ENCODE measurements at regions of chr22 and their contacts with region 1.

Region 1: GRCh38 chr22:18057568-18058209 is 20.1 kb upstream of the PEX26 start:
- DNase-seq: peak; percentile 75
- H3K4me3 ChIP-seq: peak overlapping the region; percentile 50
- H3K27ac ChIP-seq: peak overlapping the region; percentile 65
- H3K4me1 ChIP-seq: peaks cover 55% of the 10 kb centered on the region
- CTCF ChIP-seq: no peak

Region 2: GRCh38 chr22:17982572-17983141 is 75.0 kb before region 1 on chr22:
- CTCF ChIA-PET with region 1: no interaction called
- POLR2A ChIA-PET with region 1: no interaction called
- intact Hi-C with region 1: no loop called
- DNase-seq: no peak
- H3K4me3 ChIP-seq: no peak overlapping the region
- H3K27ac ChIP-seq: peak overlapping the region; percentile 64
- H3K4me1 ChIP-seq: peaks cover 71% of the 10 kb centered on the region
- CTCF ChIP-seq: no peak

Region 3: GRCh38 chr22:18012531-18012930 is 45.2 kb before region 1 on chr22:
- CTCF ChIA-PET with region 1: no interaction called
- POLR2A ChIA-PET with region 1: no interaction called
- intact Hi-C with region 1: no loop called
- DNase-seq: no peak
- H3K4me3 ChIP-seq: no peak overlapping the region
- H3K27ac ChIP-seq: no peak overlapping the region
- H3K4me1 ChIP-seq: peaks cover 22% of the 10 kb centered on the region
- CTCF ChIP-seq: no peak

Region 4: GRCh38 chr22:18031695-18032454 is 25.8 kb before region 1 on chr22:
- CTCF ChIA-PET with region 1: interaction called, 5 read pairs
- POLR2A ChIA-PET with region 1: interaction called, 48 read pairs
- intact Hi-C with region 1: no loop called
- DNase-seq: no peak
- H3K4me3 ChIP-seq: no peak overlapping the region
- H3K27ac ChIP-seq: no peak overlapping the region
- H3K4me1 ChIP-seq: peaks cover 53% of the 10 kb centered on the region
- CTCF ChIP-seq: no peak

Region 5: DNA sequence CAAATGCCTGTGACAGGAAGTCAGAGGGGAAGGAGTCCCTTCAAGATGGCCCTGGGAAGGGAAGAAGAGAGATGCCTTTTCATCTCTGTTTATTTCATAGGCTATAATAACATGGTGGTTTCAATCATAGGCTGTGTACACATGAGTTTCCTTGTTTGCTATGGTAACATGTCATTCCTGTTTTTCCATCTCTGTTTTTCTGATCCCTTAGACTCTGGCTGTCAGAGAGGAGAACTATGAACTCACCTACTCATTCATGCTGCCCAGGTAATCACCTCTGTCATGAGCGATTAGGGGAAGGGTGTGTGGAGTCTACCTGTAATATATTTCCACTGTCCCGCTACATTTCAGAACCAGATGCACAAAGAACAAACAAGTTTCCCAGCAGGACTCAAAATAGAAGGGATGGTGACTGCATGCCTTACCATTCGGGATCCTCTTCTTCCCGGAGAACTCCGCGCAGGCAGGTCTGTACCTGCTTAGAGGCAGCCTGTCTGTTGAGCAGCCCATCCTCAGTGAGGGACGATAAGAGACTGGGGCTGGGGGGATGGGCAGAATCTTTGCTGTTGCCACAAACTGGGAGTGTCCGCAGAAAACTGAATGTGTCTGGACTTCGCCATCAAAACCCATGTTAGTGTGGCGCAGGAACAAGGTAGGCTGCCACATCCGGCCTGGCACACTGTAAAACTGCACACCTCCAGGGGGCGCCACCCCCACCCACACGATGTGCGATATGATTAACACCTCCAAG is 13.0 kb after region 1 on chr22:
- CTCF ChIA-PET with region 1: interaction called, 15 read pairs
- POLR2A ChIA-PET with region 1: interaction called, 31 read pairs
- intact Hi-C with region 1: no loop called
- DNase-seq: peak; percentile 63
- H3K4me3 ChIP-seq: peak overlapping the region; percentile 57
- H3K27ac ChIP-seq: peak overlapping the region; percentile 99
- H3K4me1 ChIP-seq: peaks cover 99% of the 10 kb centered on the region
- CTCF ChIP-seq: peak; percentile 96

Measured in OCI-LY7 (cell line).